CD4-positive, alpha-beta memory T cell (primary cell): ENCODE measurements at regions of chr5 and their contacts with region 1.

Region 1: DNA sequence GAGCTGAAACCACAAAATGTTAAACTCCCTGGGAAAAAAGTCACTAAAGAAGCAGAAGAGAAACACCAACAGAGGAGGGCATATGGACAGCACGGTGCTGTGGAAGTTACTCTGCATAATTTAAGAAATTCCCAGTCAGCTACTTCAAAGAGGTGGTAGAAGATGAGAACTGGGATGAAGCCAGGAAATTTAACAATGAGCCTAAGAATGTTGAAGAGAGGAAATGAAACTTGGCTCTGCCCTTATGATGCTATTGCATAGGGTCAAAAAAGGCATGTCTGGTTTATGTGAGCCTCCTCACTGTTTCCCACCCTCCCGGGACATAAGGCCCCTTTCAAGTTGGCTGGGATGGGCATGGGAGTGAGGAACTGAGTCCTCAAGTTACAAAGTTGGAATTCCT is 25.4 kb upstream of the SNX18 start:
- DNase-seq: no peak
- H3K4me3 ChIP-seq: no peak overlapping the region
- H3K4me3 Mint-ChIP-seq: no peak overlapping the region
- H3K27ac ChIP-seq: no peak overlapping the region
- H3K27ac Mint-ChIP-seq: no peak overlapping the region
- H3K4me1 ChIP-seq: no peaks in the 10 kb centered on the region
- H3K4me1 Mint-ChIP-seq: peaks cover 0 to 4% (median 0%) of the 10 kb centered on the region in 4 donors
- H3K27me3 ChIP-seq: no peaks in the 10 kb centered on the region
- H3K27me3 Mint-ChIP-seq: peaks cover 3 to 7% of the 10 kb centered on the region in 2 donors

Region 2: GRCh38 chr5:54243473-54244080 is 248.6 kb before region 1 on chr5:
- CTCF ChIA-PET with region 1: interaction called, 10 read pairs
- POLR2A ChIA-PET with region 1: no interaction called
- intact Hi-C with region 1: loop called (anchors 1 kb)
- DNase-seq: peak in 4 of 5 donors; percentile 21 to 36 (median 28)
- H3K4me3 ChIP-seq: no peak overlapping the region
- H3K4me3 Mint-ChIP-seq: no peak overlapping the region
- H3K27ac ChIP-seq: no peak overlapping the region
- H3K27ac Mint-ChIP-seq: no peak overlapping the region
- H3K4me1 ChIP-seq: no peaks in the 10 kb centered on the region
- H3K4me1 Mint-ChIP-seq: peaks cover 3 to 9% (median 6%) of the 10 kb centered on the region in 4 donors
- H3K27me3 ChIP-seq: no peaks in the 10 kb centered on the region
- H3K27me3 Mint-ChIP-seq: no peaks in the 10 kb centered on the region

Region 3: GRCh38 chr5:54249210-54250028 is 242.8 kb before region 1 on chr5:
- CTCF ChIA-PET with region 1: interaction called, 10 read pairs
- POLR2A ChIA-PET with region 1: no interaction called
- intact Hi-C with region 1: no loop called
- DNase-seq: peak in 4 of 5 donors; percentile 5 to 14 (median 11)
- H3K4me3 ChIP-seq: no peak overlapping the region
- H3K4me3 Mint-ChIP-seq: no peak overlapping the region
- H3K27ac ChIP-seq: no peak overlapping the region
- H3K27ac Mint-ChIP-seq: no peak overlapping the region
- H3K4me1 ChIP-seq: no peaks in the 10 kb centered on the region
- H3K4me1 Mint-ChIP-seq: peaks cover 0 to 15% (median 4%) of the 10 kb centered on the region in 4 donors
- H3K27me3 ChIP-seq: no peaks in the 10 kb centered on the region
- H3K27me3 Mint-ChIP-seq: no peaks in the 10 kb centered on the region

Region 4: GRCh38 chr5:54457094-54457862 is 34.9 kb before region 1 on chr5:
- CTCF ChIA-PET with region 1: interaction called, 11 read pairs
- POLR2A ChIA-PET with region 1: no interaction called
- intact Hi-C with region 1: no loop called
- DNase-seq: no peak
- H3K4me3 ChIP-seq: no peak overlapping the region
- H3K4me3 Mint-ChIP-seq: no peak overlapping the region
- H3K27ac ChIP-seq: no peak overlapping the region
- H3K27ac Mint-ChIP-seq: no peak overlapping the region
- H3K4me1 ChIP-seq: no peaks in the 10 kb centered on the region
- H3K4me1 Mint-ChIP-seq: no peaks in the 10 kb centered on the region
- H3K27me3 ChIP-seq: no peaks in the 10 kb centered on the region
- H3K27me3 Mint-ChIP-seq: peaks cover 17 to 33% of the 10 kb centered on the region in 2 donors

Region 5: GRCh38 chr5:54469622-54470021 is 22.6 kb before region 1 on chr5:
- CTCF ChIA-PET with region 1: interaction called, 20 read pairs
- POLR2A ChIA-PET with region 1: no interaction called
- intact Hi-C with region 1: no loop called
- DNase-seq: no peak
- H3K4me3 ChIP-seq: no peak overlapping the region
- H3K4me3 Mint-ChIP-seq: peak overlapping the region in 7 of 8 donors; percentile 10 to 77 (median 46)
- H3K27ac ChIP-seq: no peak overlapping the region
- H3K27ac Mint-ChIP-seq: peak overlapping the region in 4 of 7 donors; percentile 30 to 68 (median 48)
- H3K4me1 ChIP-seq: no peaks in the 10 kb centered on the region
- H3K4me1 Mint-ChIP-seq: peaks cover 6 to 9% (median 7%) of the 10 kb centered on the region in 4 donors
- H3K27me3 ChIP-seq: no peaks in the 10 kb centered on the region
- H3K27me3 Mint-ChIP-seq: peaks cover 2 to 5% of the 10 kb centered on the region in 2 donors

Region 6: DNA sequence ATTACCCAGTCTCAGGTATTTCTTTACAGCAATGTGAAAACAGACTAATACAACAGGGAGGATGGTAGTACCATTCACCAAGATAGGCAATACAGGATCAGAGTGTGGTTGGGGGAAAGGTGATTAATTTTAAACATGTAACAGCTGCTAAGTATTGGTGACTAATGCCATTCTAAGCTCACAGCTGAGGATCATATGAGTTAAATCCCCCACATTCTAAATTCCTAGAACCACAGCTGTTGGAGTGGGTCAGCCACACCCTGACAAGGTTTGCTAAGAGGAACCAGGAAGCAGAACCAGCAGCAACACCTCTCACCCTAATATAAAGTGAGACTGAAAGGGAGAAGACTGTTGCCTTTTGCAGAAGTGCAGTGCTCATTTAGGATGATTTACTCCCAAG is 11.9 kb before region 1 on chr5:
- CTCF ChIA-PET with region 1: interaction called, 43 read pairs
- POLR2A ChIA-PET with region 1: no interaction called
- intact Hi-C with region 1: no loop called
- DNase-seq: no peak
- H3K4me3 ChIP-seq: no peak overlapping the region
- H3K4me3 Mint-ChIP-seq: no peak overlapping the region
- H3K27ac ChIP-seq: no peak overlapping the region
- H3K27ac Mint-ChIP-seq: no peak overlapping the region
- H3K4me1 ChIP-seq: no peaks in the 10 kb centered on the region
- H3K4me1 Mint-ChIP-seq: no peaks in the 10 kb centered on the region
- H3K27me3 ChIP-seq: no peaks in the 10 kb centered on the region
- H3K27me3 Mint-ChIP-seq: peaks cover 10 to 26% of the 10 kb centered on the region in 2 donors

Region 7: GRCh38 chr5:54867310-54867944 is 375.2 kb after region 1 on chr5:
- CTCF ChIA-PET with region 1: interaction called, 34 read pairs
- POLR2A ChIA-PET with region 1: no interaction called
- intact Hi-C with region 1: no loop called
- DNase-seq: peak in 4 of 5 donors; percentile 58 to 66 (median 62)
- H3K4me3 ChIP-seq: no peak overlapping the region
- H3K4me3 Mint-ChIP-seq: peak overlapping the region in 7 of 8 donors; percentile 15 to 75 (median 39)
- H3K27ac ChIP-seq: no peak overlapping the region
- H3K27ac Mint-ChIP-seq: peak overlapping the region in 2 of 7 donors; percentile 3 to 11
- H3K4me1 ChIP-seq: peaks cover 4% of the 10 kb centered on the region
- H3K4me1 Mint-ChIP-seq: peaks cover 0 to 5% (median 4%) of the 10 kb centered on the region in 4 donors
- H3K27me3 ChIP-seq: peaks cover 3% of the 10 kb centered on the region
- H3K27me3 Mint-ChIP-seq: peaks cover 26% of the 10 kb centered on the region in 2 donors